Aorta (tissue), 5 donors: ENCODE measurements at regions of chr15 and their contacts with region 1.

Region 1: DNA sequence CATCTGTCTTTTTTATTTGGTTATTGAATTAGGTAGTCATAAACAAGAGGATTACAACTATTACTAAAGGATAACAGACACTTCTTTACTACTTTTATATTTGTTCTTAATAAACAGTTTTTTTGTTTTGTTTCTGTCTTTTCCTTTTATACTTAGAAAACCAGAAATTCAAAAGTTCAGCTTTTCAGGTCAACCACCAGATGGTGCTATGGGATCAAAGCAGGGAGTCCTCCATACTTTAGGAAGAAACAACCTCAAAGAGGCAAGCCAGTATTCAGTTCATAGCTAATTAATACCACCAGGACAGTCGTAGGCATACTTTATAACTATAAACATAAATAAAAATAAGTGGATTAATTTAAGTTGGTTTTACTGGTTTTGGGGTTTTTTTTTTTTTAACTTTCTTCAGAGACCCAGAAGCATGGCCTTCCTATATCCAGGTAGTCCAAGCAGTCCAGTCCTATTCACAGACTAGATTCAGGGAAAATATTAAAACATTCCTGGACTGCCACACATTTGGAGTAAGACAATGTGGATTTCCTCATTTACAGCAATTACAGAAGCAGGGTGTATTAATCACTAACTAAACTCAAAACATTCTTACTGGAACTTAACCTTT is 16.0 kb upstream of the EID1 start:
- DNase-seq: no peak
- ATAC-seq: peak; percentile 79
- H3K4me3 ChIP-seq: no peak overlapping the region
- H3K27ac ChIP-seq: no peak overlapping the region
- H3K4me1 ChIP-seq: peaks cover 0 to 1% of the 10 kb centered on the region in 2 donors
- H3K27me3 ChIP-seq: no peaks in the 10 kb centered on the region

Region 2: GRCh38 chr15:49145651-49146609 is 284.0 kb after region 1 on chr15:
- intact Hi-C with region 1: loop called (anchors 2 to 5 kb)
- DNase-seq: no peak
- ATAC-seq: no peak
- H3K4me3 ChIP-seq: no peak overlapping the region
- H3K27ac ChIP-seq: no peak overlapping the region
- H3K4me1 ChIP-seq: peaks cover 0 to 2% of the 10 kb centered on the region in 2 donors
- H3K27me3 ChIP-seq: no peaks in the 10 kb centered on the region